ENCODE measurements at regions of chr19 and their contacts with region 1.

Region 1: DNA sequence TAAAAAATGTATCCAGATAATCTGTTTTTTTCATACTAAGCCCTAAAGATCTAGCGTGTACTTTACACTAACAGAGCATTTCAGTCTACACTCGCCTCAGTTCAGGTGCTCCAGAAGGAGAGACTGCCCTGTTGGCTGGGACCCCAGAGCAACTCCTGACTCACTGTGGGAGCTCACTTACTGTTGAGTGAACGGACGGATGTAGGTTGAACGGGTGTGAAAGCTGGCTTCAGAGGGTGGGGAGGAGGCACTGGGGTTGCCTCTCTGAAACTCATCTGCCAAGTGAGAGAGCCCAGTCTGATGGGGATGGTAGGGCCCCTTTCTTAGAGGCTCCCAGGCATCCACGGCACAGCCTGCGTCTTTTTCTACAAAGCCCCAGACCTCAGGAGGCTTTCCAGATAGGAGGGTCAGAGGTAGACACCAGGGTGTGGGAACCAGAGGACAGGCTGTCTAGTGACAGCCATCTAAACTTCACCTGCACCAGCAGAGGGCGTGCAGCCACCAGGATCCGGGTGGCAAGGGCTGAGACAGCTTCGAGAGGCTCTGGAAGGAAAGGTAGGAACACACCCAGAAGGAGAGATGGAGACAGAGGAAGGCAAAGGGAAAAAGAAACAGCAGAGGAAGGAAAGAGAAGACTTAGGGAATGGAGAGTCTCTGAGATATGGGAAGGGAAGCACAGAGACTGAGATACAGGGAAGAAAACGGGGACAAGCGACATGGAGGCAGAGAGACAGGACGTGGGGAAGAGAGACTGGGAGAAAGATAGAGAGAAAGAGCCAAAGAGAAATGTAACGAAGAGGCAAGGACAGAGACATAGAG is 3.7 kb downstream of the KASH5 start:
- DNase-seq: peak; percentile 63
- ATAC-seq: peak; percentile 88
- H3K4me3 ChIP-seq: no peak overlapping the region
- H3K27ac ChIP-seq: no peak overlapping the region
- H3K4me1 ChIP-seq: no peaks in the 10 kb centered on the region
- H3K27me3 ChIP-seq: peaks cover 6 to 38% of the 10 kb centered on the region in 2 experiments
- CTCF ChIP-seq: peak; percentile 96
- EP300 ChIP-seq: no peak
- POLR2A ChIP-seq: no peak
- RAD21 ChIP-seq: peak; percentile 85

Region 2: GRCh38 chr19:49430678-49431329 is 39.0 kb after region 1 on chr19:
- CTCF ChIA-PET with region 1: interaction called, 16 read pairs
- POLR2A ChIA-PET with region 1: no interaction called
- in situ Hi-C with region 1: loop called (anchors 5 kb)
- intact Hi-C with region 1: loop called (anchors 5 kb)
- DNase-seq: no peak
- ATAC-seq: peak; percentile 48
- H3K4me3 ChIP-seq: no peak overlapping the region
- H3K27ac ChIP-seq: no peak overlapping the region
- H3K4me1 ChIP-seq: peaks cover 16% of the 10 kb centered on the region
- H3K27me3 ChIP-seq: peaks cover 6 to 87% of the 10 kb centered on the region in 2 experiments; a peak in 4 of 5 replicates
- CTCF ChIP-seq: peak; percentile 74
- EP300 ChIP-seq: no peak
- POLR2A ChIP-seq: no peak
- RAD21 ChIP-seq: 0 out of 2 replicates have a peak, but pooled peaks have one; percentile 10

Region 3: DNA sequence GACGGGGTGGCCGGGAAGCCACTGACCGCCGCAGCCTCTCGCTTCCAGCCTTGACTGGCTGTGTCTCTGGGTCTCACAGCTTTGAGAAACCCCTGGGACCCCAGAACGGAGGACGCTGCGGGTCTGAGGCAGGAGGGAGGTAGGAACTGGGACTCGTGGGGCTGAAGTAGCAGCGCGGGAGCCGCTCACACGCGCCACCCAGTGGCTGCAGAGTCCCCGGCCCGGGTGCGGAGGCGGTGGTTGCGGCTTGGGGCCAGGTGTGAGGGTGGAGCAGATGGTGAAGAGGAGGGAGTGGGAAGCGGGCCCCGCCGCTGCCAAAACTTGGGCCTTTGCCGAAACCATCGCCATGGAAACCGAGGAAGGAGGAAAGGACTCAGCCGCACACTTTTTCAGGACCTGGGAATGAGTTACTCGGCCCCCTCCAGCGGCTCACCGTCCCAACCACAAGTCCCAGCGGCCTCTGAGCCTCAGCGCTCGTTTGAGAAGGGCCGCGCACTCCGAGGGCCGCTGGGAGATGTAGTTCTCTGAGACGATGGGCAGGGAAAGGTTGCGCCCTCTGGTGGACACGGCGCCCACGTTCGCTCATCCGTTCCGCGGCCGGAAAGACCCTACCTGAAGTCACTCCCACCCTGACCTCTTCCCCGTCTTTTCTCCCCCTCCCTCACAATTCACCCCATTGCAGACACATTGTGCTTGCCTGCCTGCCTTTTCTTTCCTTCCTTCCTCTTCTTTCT is 51.7 kb after region 1 on chr19:
- CTCF ChIA-PET with region 1: interaction called, 45 read pairs
- POLR2A ChIA-PET with region 1: interaction called, 3 read pairs
- in situ Hi-C with region 1: no loop called
- intact Hi-C with region 1: loop called (anchors 1 kb)
- DNase-seq: peak; percentile 88
- ATAC-seq: peak; percentile 86
- H3K4me3 ChIP-seq: peak overlapping the region; percentile 70 to 76 (median 74)
- H3K27ac ChIP-seq: peak overlapping the region; percentile 72
- H3K4me1 ChIP-seq: peaks cover 27% of the 10 kb centered on the region
- H3K27me3 ChIP-seq: peaks cover 7 to 38% of the 10 kb centered on the region in 2 experiments; a peak in 4 of 5 replicates
- CTCF ChIP-seq: peak; percentile 84
- EP300 ChIP-seq: no peak
- POLR2A ChIP-seq: no peak; a peak in 1 of 4 replicates
- RAD21 ChIP-seq: peak; percentile 84

Measured in HepG2 (cell line).